A673 (cell line): ENCODE measurements at regions of chr1 and their contacts with region 1.

Region 1: GRCh38 chr1:14113841-14114567 is 414.0 kb downstream of the PRDM2 start:
- DNase-seq: peak; percentile 82
- H3K4me3 ChIP-seq: no peak overlapping the region
- H3K27ac ChIP-seq: peak overlapping the region; percentile 76
- H3K4me1 ChIP-seq: peaks cover 25% of the 10 kb centered on the region
- H3K27me3 ChIP-seq: no peaks in the 10 kb centered on the region
- CTCF ChIP-seq: peak; percentile 83

Region 2: DNA sequence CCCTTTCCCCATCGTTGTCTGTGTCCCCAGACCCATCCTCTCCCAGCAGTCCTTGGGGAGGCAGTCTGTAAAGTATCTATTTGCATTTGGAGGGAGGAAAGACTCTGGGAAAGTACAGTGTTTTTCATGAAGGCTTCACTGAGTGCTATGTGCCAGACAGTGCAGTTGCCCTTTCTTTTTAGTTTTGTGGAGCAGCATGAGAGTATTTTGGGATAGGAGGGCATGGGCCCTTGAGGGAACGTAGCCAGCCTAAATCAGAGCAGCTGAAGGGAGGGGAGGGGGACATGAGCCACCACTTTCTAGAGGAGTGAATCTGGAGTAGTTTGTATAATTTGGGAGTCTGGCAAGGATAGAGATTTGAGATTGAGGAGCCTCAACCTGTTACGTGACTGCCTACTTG is 80.5 kb after region 1 on chr1:
- CTCF ChIA-PET with region 1: no interaction called
- POLR2A ChIA-PET with region 1: no interaction called
- intact Hi-C with region 1: no loop called
- DNase-seq: no peak
- H3K4me3 ChIP-seq: no peak overlapping the region
- H3K27ac ChIP-seq: no peak overlapping the region
- H3K4me1 ChIP-seq: no peaks in the 10 kb centered on the region
- H3K27me3 ChIP-seq: no peaks in the 10 kb centered on the region
- CTCF ChIP-seq: no peak

Region 3: DNA sequence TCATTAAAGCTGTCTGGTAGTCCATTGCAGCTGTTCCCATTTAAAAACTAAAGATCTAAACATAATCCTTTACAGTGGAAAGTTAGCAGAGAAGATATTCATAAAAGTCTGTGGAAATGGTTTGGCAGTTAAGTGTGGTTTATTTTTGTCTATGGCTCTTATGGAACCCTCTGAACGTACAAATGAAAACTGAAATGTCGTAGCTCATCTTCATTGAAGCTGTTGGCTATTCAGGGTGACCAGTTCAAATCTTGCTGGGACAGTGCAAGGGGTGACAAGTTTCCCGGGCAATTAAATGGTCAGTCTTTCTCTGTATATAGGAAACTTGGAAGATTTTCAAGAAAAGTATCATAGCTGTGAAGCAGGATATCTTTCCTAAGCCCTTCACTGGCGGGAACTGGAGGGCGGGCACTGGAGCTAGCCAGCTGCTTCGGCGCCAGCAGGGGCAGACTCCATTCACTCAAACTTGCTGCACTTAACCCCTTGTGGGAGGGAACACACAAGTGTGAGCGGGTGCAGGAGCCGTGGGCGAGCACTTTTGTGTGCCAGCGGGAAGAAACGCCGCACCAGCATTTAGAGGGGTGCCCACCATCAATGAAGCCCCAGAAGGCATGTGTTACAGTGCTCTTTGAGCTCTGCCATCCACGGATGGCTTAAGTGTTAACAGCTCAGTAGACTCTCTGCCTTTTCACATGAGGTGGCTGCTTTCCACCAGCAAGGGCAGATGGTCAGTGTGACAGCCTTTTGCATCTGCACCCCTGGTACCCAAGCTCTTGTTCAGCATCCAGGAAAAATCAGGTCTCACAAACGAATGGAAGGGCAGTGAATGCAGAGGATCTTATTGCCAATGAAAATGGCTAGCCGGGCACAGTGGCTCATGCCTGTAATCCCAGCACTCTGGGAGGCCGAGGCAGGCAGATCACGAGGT is 252.4 kb after region 1 on chr1:
- CTCF ChIA-PET with region 1: no interaction called
- POLR2A ChIA-PET with region 1: no interaction called
- intact Hi-C with region 1: loop called (anchors 10 kb)
- DNase-seq: peak; percentile 74
- H3K4me3 ChIP-seq: no peak overlapping the region
- H3K27ac ChIP-seq: no peak overlapping the region
- H3K4me1 ChIP-seq: peaks cover 10% of the 10 kb centered on the region
- H3K27me3 ChIP-seq: no peaks in the 10 kb centered on the region
- CTCF ChIP-seq: peak; percentile 42

Region 4: GRCh38 chr1:14538335-14538734 is 424.3 kb after region 1 on chr1:
- CTCF ChIA-PET with region 1: no interaction called
- POLR2A ChIA-PET with region 1: no interaction called
- intact Hi-C with region 1: loop called (anchors 10 kb)
- DNase-seq: peak; percentile 44
- H3K4me3 ChIP-seq: no peak overlapping the region
- H3K27ac ChIP-seq: no peak overlapping the region
- H3K4me1 ChIP-seq: peaks cover 32% of the 10 kb centered on the region
- H3K27me3 ChIP-seq: no peaks in the 10 kb centered on the region
- CTCF ChIP-seq: peak; percentile 44

Region 5: GRCh38 chr1:15028102-15028501 is 914.1 kb after region 1 on chr1:
- CTCF ChIA-PET with region 1: no interaction called
- POLR2A ChIA-PET with region 1: no interaction called
- intact Hi-C with region 1: loop called (anchors 5 kb)
- DNase-seq: no peak
- H3K4me3 ChIP-seq: no peak overlapping the region
- H3K27ac ChIP-seq: no peak overlapping the region
- H3K4me1 ChIP-seq: no peaks in the 10 kb centered on the region
- H3K27me3 ChIP-seq: no peaks in the 10 kb centered on the region
- CTCF ChIP-seq: no peak